Activated CD8-positive, alpha-beta T cell treated with anti-CD3 and anti-CD28 coated beads for 36 hours (primary cell): ENCODE measurements at regions of chr6 and their contacts with region 1.

Region 1: GRCh38 chr6:38671885-38672467 is 31.0 kb downstream of the GLO1 start:
- DNase-seq: peak; percentile 38
- ATAC-seq: peak; percentile 90
- H3K4me3 Mint-ChIP-seq: no peak overlapping the region
- H3K27ac Mint-ChIP-seq: no peak overlapping the region
- H3K4me1 Mint-ChIP-seq: peaks cover 23% of the 10 kb centered on the region
- H3K27me3 Mint-ChIP-seq: no peaks in the 10 kb centered on the region
- CTCF ChIP-seq: peak; percentile 80

Region 2: GRCh38 chr6:38509713-38510112 is 162.3 kb before region 1 on chr6:
- CTCF ChIA-PET with region 1: no interaction called
- POLR2A ChIA-PET with region 1: no interaction called
- intact Hi-C with region 1: loop called (anchors 10 kb)
- DNase-seq: no peak
- ATAC-seq: no peak
- H3K4me3 Mint-ChIP-seq: no peak overlapping the region
- H3K27ac Mint-ChIP-seq: no peak overlapping the region
- H3K4me1 Mint-ChIP-seq: no peaks in the 10 kb centered on the region
- H3K27me3 Mint-ChIP-seq: no peaks in the 10 kb centered on the region
- CTCF ChIP-seq: no peak